PC-9 (cell line): ENCODE measurements at regions of chr16 and their contacts with region 1.

Region 1: GRCh38 chr16:66483689-66484481 is 56.8 kb downstream of the BEAN1 start:
- DNase-seq: peak; percentile 74 to 82
- H3K4me3 ChIP-seq: no peak overlapping the region
- H3K27ac ChIP-seq: no peak overlapping the region
- H3K4me1 ChIP-seq: peaks cover 56% of the 10 kb centered on the region
- H3K27me3 ChIP-seq: no peaks in the 10 kb centered on the region
- CTCF ChIP-seq: peak; percentile 93

Region 2: GRCh38 chr16:66275775-66276428 is 208.0 kb before region 1 on chr16:
- CTCF ChIA-PET with region 1: no interaction called
- POLR2A ChIA-PET with region 1: no interaction called
- intact Hi-C with region 1: loop called (anchors 5 kb)
- DNase-seq: peak; percentile 25 to 63
- H3K4me3 ChIP-seq: no peak overlapping the region
- H3K27ac ChIP-seq: no peak overlapping the region
- H3K4me1 ChIP-seq: peaks cover 64% of the 10 kb centered on the region
- H3K27me3 ChIP-seq: no peaks in the 10 kb centered on the region
- CTCF ChIP-seq: peak; percentile 70

Region 3: GRCh38 chr16:66382171-66382965 is 101.5 kb before region 1 on chr16:
- CTCF ChIA-PET with region 1: interaction called, 3 read pairs
- POLR2A ChIA-PET with region 1: no interaction called
- intact Hi-C with region 1: loop called (anchors 1 kb)
- DNase-seq: peak; percentile 68 to 97
- H3K4me3 ChIP-seq: peak overlapping the region; percentile 23; the same call in 1 of the 2 replicates
- H3K27ac ChIP-seq: peak overlapping the region; percentile 96
- H3K4me1 ChIP-seq: peaks cover 68% of the 10 kb centered on the region
- H3K27me3 ChIP-seq: no peaks in the 10 kb centered on the region
- CTCF ChIP-seq: 0 out of 2 replicates have a peak, but pooled peaks have one; percentile 15

Region 4: DNA sequence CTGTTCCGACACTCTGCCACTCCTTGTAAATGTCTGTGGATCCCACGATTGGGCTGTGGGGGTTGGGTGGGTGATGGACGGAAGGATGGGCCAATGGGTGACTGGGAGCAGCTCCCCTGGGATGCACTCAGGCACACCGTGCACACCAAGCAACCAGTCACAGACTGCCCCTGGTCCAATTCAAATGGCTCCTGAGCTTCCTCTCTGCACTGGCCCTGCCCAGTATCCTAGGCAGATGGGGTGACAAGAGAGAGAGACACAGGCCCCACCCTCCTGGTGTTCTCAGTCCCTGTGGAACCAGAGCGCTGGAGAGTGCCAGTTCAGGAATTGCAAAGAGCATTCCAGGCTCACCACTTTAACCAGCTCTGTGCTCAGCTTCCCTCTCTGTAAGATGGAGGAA is 24.0 kb before region 1 on chr16:
- CTCF ChIA-PET with region 1: no interaction called
- POLR2A ChIA-PET with region 1: no interaction called
- intact Hi-C with region 1: no loop called
- DNase-seq: no peak
- H3K4me3 ChIP-seq: no peak overlapping the region
- H3K27ac ChIP-seq: no peak overlapping the region
- H3K4me1 ChIP-seq: peaks cover 3% of the 10 kb centered on the region; the same call in 1 of the 2 replicates
- H3K27me3 ChIP-seq: no peaks in the 10 kb centered on the region
- CTCF ChIP-seq: no peak

Region 5: GRCh38 chr16:66516808-66517585 is 33.1 kb after region 1 on chr16:
- CTCF ChIA-PET with region 1: interaction called, 6 read pairs
- POLR2A ChIA-PET with region 1: interaction called, 3 read pairs
- intact Hi-C with region 1: loop called (anchors 1 kb)
- DNase-seq: peak; percentile 91 to 98
- H3K4me3 ChIP-seq: peak overlapping the region; percentile 25; the same call in 1 of the 2 replicates
- H3K27ac ChIP-seq: peak overlapping the region; percentile 84
- H3K4me1 ChIP-seq: peaks cover 78% of the 10 kb centered on the region
- H3K27me3 ChIP-seq: no peaks in the 10 kb centered on the region
- CTCF ChIP-seq: no peak

Region 6: DNA sequence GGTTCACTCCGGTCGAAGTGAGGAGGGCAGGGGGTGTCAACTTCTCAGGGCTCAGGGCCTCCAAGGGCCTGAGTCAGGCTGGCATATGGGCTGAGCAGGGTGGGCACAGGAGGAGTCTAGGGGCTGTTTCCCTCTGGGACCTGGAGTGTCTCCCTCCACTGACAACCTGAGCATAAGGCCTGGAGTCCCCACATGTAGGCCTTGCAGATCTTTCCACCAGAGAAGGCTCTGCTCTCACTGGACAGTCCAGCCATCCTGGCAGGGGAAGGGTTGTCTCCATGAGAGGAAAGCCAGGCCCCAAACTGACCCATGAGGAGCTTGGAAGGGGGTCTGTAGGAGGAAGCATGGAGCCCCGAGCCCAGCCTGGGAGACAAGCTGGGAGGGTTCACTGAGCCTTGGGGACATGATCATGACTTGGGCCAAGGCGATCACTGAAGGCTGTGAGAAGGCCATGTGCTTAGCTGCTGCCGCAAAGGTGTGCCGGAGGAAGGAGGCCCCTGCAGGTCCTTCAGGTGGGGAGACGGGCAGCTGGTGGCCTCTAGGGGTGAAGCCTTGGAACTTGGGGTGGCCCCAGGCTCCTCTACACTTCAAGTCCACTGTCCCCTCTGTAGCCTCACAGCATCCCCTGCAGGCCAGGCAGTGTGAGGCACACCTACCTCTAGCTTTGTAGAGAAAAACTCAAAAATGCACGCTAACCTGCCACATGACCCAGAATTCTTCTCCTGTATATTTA is 105.3 kb after region 1 on chr16:
- CTCF ChIA-PET with region 1: no interaction called
- POLR2A ChIA-PET with region 1: no interaction called
- intact Hi-C with region 1: loop called (anchors 5 kb)
- DNase-seq: peak; percentile 35 to 40
- H3K4me3 ChIP-seq: no peak overlapping the region
- H3K27ac ChIP-seq: no peak overlapping the region
- H3K4me1 ChIP-seq: no peaks in the 10 kb centered on the region
- H3K27me3 ChIP-seq: no peaks in the 10 kb centered on the region
- CTCF ChIP-seq: peak; percentile 57